ENCODE measurements at regions of chr1 and their contacts with region 1.

Region 1: GRCh38 chr1:98677288-98677687 is 15.8 kb downstream of the SNX7 start:
- DNase-seq: peak; percentile 90
- H3K4me3 Mint-ChIP-seq: no peak overlapping the region
- H3K27ac Mint-ChIP-seq: peak overlapping the region; percentile 82
- H3K4me1 Mint-ChIP-seq: peaks cover 11% of the 10 kb centered on the region
- H3K27me3 Mint-ChIP-seq: no peaks in the 10 kb centered on the region
- CTCF ChIP-seq: no peak

Region 2: GRCh38 chr1:98661544-98662268 is 15.6 kb before region 1 on chr1 and contains the start of gene SNX7:
- CTCF ChIA-PET with region 1: interaction called, 7 read pairs
- POLR2A ChIA-PET with region 1: interaction called, 10 read pairs
- intact Hi-C with region 1: no loop called
- DNase-seq: peak; percentile 81
- H3K4me3 Mint-ChIP-seq: peak within 1 kb of the TSS; percentile 91
- H3K27ac Mint-ChIP-seq: peak within 1 kb of the TSS; percentile 88
- H3K4me1 Mint-ChIP-seq: peaks cover 28% of the 10 kb centered on the region
- H3K27me3 Mint-ChIP-seq: no peaks in the 10 kb centered on the region
- CTCF ChIP-seq: peak; percentile 5
- total RNA-seq, gene SNX7: 22.8 and 24.2 TPM in 2 replicates

Measured in MCF 10A (cell line).